Dorsolateral prefrontal cortex (tissue), 120 donors: ENCODE measurements at regions of chr9 and their contacts with region 1.

Region 1: DNA sequence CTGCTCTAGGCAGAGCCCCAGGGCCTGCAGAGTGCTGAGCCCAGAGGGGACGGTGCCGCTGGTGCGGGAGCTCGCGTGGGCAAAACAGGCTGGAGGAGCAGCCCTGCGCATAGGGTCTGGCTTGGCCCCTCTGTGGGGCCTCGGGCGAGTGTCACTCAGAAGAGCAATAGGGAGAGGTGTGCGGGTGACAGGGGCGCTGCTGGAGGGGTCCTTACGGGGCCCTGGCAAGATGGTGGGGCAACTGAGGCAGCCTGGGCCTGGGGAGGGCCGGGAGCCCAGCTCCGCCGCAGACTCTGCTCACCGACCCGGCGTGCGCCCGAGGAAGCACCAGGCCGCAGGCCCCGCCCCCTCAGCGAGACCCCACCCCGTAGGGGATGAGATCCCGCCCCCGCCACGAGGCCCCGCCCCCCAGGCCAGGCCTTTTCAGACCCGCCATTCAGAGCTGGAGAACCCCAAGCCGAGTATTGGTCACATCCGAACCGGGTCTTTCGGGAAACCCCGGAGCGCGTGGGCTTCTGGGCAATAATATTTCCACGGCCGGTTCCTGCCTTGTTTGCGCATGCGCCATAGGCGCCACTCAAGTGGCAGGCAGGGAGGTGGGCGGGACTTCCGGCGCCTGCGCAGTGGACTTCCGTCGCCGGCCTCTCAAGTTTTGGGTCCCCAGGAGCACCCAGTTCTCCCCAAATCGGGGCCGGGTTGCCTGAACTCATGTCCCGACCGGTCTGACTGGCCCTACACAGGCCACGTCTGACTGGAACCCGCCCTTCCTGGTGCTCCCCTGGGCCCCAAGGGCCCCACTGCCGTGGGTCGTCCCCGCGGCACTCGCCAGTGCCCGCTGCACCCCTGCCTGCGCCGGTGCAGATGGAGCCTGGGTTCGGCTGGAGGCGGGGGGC is 1.3 kb upstream of the RNF208 start:
- DNase-seq: peak; percentile 93 to 97 (median 96)
- H3K4me3 ChIP-seq: peak overlapping the region; percentile 46 to 97 (median 78)
- H3K27ac ChIP-seq: peak overlapping the region; percentile 38 to 97 (median 88)
- H3K27me3 ChIP-seq: peaks cover 0 to 4% (median 0%) of the 10 kb centered on the region in 45 donors
- CTCF ChIP-seq: peak in 14 of 56 donors; percentile 10 to 51 (median 19)

Region 2: GRCh38 chr9:136787690-136788400 is 435.5 kb before region 1 on chr9:
- intact Hi-C with region 1: no loop called
- DNase-seq: peak in 9 of 10 donors; percentile 53 to 78 (median 72)
- H3K4me3 ChIP-seq: peak overlapping the region in 25 of 59 donors; percentile 2 to 39 (median 12)
- H3K27ac ChIP-seq: peak overlapping the region in 58 of 59 donors; percentile 52 to 99 (median 93)
- H3K27me3 ChIP-seq: no peaks in the 10 kb centered on the region
- CTCF ChIP-seq: peak in 55 of 56 donors; percentile 80 to 98 (median 92)

Region 3: DNA sequence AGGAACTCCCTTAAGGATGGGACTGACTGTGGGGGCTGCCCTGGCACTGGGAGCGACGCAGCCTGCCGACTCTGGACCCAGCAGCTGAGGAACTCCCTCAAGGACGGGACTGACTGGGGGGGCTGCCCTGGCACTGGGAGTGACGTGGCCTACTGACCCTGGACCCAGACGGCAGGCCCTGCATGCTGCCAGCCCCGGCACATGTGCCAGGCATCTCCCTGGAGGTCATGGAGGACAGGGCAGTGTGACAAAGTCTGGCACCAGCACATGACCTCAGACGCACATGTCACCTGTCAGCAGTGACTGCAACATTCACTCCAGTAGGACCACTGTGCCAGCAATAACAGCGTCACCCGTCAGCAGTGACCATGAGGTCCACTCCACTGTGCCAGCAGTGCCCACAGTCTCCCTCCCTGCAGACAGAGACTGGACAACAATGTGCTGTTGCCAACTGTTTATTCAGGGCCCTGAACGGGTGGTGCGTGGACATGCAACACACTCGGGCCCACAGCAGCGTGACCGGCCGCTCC is 283.3 kb before region 1 on chr9:
- intact Hi-C with region 1: no loop called
- DNase-seq: peak; percentile 48 to 89 (median 79)
- H3K4me3 ChIP-seq: peak overlapping the region in 4 of 59 donors; percentile 0 to 24 (median 12)
- H3K27ac ChIP-seq: peak overlapping the region; percentile 4 to 97 (median 85)
- H3K27me3 ChIP-seq: no peaks in the 10 kb centered on the region
- CTCF ChIP-seq: peak in 1 of 56 donors; percentile 12

Region 4: DNA sequence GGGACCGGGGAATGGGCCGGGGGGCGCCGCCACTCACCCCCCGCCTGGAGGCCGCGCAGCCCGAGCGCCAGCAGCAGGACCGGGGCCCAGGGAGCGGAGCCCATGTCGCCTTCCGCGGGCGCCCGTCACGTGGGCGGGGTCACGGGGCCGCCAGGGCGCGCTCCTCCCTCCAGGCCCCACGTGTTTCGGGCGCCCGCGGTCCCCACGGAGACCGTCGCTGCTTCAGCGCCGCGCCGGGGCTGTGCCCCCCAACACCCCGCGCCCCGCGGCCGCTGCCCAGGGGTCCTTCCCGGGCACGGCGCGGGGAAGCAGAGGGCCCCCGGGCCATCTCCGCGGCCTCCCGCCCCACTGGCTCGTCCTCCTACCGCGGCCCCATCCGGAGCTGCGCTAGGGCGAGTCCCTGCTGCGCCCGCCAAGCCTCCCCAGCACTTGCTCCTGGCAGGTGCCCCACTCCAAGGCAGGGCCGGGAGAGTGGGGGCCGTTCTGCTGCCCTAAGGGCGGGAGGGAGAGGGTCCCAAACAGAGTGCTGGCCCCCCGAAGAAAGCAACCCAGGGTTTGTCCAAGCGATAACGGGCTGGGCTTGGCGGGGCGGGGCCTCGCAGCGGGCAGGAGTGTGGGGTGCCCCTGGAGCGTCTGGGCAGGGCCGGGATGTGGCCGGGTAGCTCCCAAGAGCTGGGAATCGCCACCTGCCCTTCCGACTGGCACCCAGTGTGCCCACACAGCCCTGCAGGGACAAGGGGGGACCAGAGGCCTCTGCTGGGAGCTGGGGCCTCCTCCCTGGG is 108.5 kb before region 1 on chr9 and contains the start of gene DPP7:
- intact Hi-C with region 1: loop called in 1 of 2 experiments (anchors 5 kb)
- DNase-seq: peak; percentile 66 to 90 (median 76)
- H3K4me3 ChIP-seq: peak within 1 kb of the TSS; percentile 52 to 93 (median 81)
- H3K27ac ChIP-seq: peak within 1 kb of the TSS in 55 of 59 donors; percentile 24 to 90 (median 76)
- H3K27me3 ChIP-seq: no peaks in the 10 kb centered on the region
- CTCF ChIP-seq: peak in 17 of 56 donors; percentile 7 to 47 (median 20)
- total RNA-seq, gene DPP7: 156 to 315 (median 208) TPM

Region 5: GRCh38 chr9:137123468-137123837 is 99.9 kb before region 1 on chr9:
- intact Hi-C with region 1: loop called (anchors 2 to 5 kb)
- DNase-seq: no peak
- H3K4me3 ChIP-seq: no peak overlapping the region
- H3K27ac ChIP-seq: no peak overlapping the region
- H3K27me3 ChIP-seq: no peaks in the 10 kb centered on the region
- CTCF ChIP-seq: no peak

Region 6: DNA sequence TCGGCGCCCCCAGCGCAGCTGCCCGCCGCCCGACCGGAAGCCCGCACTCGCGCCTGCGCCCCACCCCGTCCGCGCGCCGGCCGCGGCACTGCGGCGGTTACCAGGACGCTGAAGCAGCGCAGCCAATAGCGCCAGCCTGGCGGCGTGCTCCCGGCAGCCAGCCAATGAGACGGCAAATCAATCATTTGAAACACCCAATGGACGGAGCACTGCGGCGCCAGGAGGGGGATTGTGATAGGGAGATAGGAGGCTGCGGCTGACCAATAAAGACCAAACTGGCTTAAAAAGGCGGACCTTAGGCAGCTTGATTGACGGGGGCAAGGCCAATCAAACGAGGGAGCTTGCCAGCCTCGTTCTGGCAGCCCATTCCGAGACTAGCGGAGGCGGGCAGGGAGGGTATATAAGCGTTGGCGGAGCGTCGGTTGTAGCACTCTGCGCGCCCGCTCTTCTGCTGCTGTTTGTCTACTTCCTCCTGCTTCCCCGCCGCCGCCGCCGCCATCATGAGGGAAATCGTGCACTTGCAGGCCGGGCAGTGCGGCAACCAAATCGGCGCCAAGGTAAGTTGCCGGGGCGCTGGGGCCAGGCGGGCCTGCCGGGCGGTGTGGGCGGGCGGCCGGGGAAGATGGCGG is 17.7 kb after region 1 on chr9 and contains the start of gene TUBB4B:
- intact Hi-C with region 1: loop called in 1 of 2 experiments (anchors 2 kb)
- DNase-seq: peak; percentile 99 to 100 (median 100)
- H3K4me3 ChIP-seq: peak within 1 kb of the TSS; percentile 74 to 98 (median 86)
- H3K27ac ChIP-seq: peak within 1 kb of the TSS; percentile 79 to 99 (median 98)
- H3K27me3 ChIP-seq: no peaks in the 10 kb centered on the region
- CTCF ChIP-seq: peak in 13 of 56 donors; percentile 2 to 54 (median 17)
- total RNA-seq, gene TUBB4B: 132 to 331 (median 230) TPM